ENCODE measurements at regions of chr17 and their contacts with region 1.

Region 1: GRCh38 chr17:59619293-59620063 is at the start of gene CLTC:
- DNase-seq: peak; percentile 95
- H3K4me3 ChIP-seq: peak within 1 kb of the TSS; percentile 99
- H3K4me3 Mint-ChIP-seq: peak within 1 kb of the TSS; percentile 95
- H3K27ac Mint-ChIP-seq: peak within 1 kb of the TSS; percentile 100
- H3K4me1 ChIP-seq: peaks cover 51% of the 10 kb centered on the region
- H3K4me1 Mint-ChIP-seq: peaks cover 31% of the 10 kb centered on the region
- H3K27me3 ChIP-seq: no peaks in the 10 kb centered on the region
- H3K27me3 Mint-ChIP-seq: no peaks in the 10 kb centered on the region
- CTCF ChIP-seq: no peak
- total RNA-seq, gene CLTC: 289 and 302 TPM in 2 replicates

Region 2: GRCh38 chr17:59565171-59565969 is 54.1 kb before region 1 on chr17 and contains the start of gene DHX40:
- CTCF ChIA-PET with region 1: no interaction called
- POLR2A ChIA-PET with region 1: interaction called, 8 read pairs
- intact Hi-C with region 1: loop called (anchors 2 kb)
- DNase-seq: peak; percentile 95 to 97
- H3K4me3 ChIP-seq: peak within 1 kb of the TSS; percentile 80
- H3K4me3 Mint-ChIP-seq: peak within 1 kb of the TSS; percentile 99
- H3K27ac Mint-ChIP-seq: peak within 1 kb of the TSS; percentile 99
- H3K4me1 ChIP-seq: 0 out of 2 replicates have a peak, but pooled peaks cover 5% of the 10 kb centered on the region
- H3K4me1 Mint-ChIP-seq: no peaks in the 10 kb centered on the region
- H3K27me3 ChIP-seq: no peaks in the 10 kb centered on the region
- H3K27me3 Mint-ChIP-seq: no peaks in the 10 kb centered on the region
- CTCF ChIP-seq: no peak
- total RNA-seq, gene DHX40: 28.6 and 32.7 TPM in 2 replicates

Region 3: DNA sequence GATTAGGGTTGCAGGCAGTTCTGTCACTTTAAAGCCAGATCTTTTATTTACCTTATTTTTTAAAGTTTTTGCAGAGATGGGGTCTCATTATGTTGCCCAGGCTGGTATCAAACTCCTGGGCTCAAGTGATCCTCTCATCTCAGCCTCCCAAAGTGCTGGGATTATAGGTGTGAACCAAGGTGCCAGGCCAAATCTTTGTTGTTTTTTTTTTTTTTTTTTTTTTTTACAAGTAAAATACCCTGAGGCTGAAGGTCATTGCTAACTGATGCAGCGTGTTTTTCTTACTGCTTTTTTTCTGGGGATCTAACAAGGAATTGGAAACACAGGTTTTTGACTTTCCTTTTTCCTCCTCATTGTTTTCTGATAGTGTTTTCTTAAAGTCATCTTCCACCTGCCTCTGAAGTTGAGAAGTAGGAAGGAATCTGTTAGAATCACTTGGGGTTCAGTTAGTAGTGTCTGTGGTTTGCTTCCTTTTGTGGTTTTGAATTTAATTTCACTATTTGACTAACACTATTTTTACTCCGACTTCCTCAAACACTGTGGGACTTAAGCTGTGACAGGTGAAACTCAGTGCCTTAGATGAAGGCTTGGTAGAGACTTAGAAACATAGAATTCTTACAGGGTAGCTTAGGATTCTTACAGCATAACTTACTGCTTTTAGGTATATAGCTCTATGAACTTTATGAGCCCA is 22.5 kb after region 1 on chr17:
- CTCF ChIA-PET with region 1: no interaction called
- POLR2A ChIA-PET with region 1: interaction called, 10 read pairs
- intact Hi-C with region 1: loop called (anchors 1 kb)
- DNase-seq: no peak
- H3K4me3 ChIP-seq: no peak overlapping the region
- H3K4me3 Mint-ChIP-seq: no peak overlapping the region
- H3K27ac Mint-ChIP-seq: peak overlapping the region; percentile 48
- H3K4me1 ChIP-seq: peaks cover 8% of the 10 kb centered on the region
- H3K4me1 Mint-ChIP-seq: peaks cover 23% of the 10 kb centered on the region
- H3K27me3 ChIP-seq: no peaks in the 10 kb centered on the region
- H3K27me3 Mint-ChIP-seq: no peaks in the 10 kb centered on the region
- CTCF ChIP-seq: no peak

Measured in Caco-2 (cell line).